ENCODE measurements at regions of chr12 and their contacts with region 1.

Region 1: GRCh38 chr12:104792567-104792966 is 165.5 kb downstream of the SLC41A2 start:
- DNase-seq: peak; percentile 30 to 50
- H3K4me3 ChIP-seq: no peak overlapping the region
- H3K27ac ChIP-seq: no peak overlapping the region
- H3K4me1 ChIP-seq: 0 out of 2 replicates have a peak, but pooled peaks cover 6% of the 10 kb centered on the region
- H3K27me3 ChIP-seq: no peaks in the 10 kb centered on the region
- CTCF ChIP-seq: no peak

Region 2: GRCh38 chr12:104604070-104604994 is 188.2 kb before region 1 on chr12:
- CTCF ChIA-PET with region 1: no interaction called
- POLR2A ChIA-PET with region 1: no interaction called
- intact Hi-C with region 1: loop called (anchors 1 kb)
- DNase-seq: peak; percentile 77 to 90
- H3K4me3 ChIP-seq: peak overlapping the region; percentile 45; the same call in 1 of the 2 replicates
- H3K27ac ChIP-seq: peak overlapping the region; percentile 95
- H3K4me1 ChIP-seq: peaks cover 80% of the 10 kb centered on the region
- H3K27me3 ChIP-seq: no peaks in the 10 kb centered on the region
- CTCF ChIP-seq: no peak

Measured in PC-9 (cell line).